Prostate gland (tissue), 2 donors: ENCODE measurements at regions of chr3 and their contacts with region 1.

Region 1: DNA sequence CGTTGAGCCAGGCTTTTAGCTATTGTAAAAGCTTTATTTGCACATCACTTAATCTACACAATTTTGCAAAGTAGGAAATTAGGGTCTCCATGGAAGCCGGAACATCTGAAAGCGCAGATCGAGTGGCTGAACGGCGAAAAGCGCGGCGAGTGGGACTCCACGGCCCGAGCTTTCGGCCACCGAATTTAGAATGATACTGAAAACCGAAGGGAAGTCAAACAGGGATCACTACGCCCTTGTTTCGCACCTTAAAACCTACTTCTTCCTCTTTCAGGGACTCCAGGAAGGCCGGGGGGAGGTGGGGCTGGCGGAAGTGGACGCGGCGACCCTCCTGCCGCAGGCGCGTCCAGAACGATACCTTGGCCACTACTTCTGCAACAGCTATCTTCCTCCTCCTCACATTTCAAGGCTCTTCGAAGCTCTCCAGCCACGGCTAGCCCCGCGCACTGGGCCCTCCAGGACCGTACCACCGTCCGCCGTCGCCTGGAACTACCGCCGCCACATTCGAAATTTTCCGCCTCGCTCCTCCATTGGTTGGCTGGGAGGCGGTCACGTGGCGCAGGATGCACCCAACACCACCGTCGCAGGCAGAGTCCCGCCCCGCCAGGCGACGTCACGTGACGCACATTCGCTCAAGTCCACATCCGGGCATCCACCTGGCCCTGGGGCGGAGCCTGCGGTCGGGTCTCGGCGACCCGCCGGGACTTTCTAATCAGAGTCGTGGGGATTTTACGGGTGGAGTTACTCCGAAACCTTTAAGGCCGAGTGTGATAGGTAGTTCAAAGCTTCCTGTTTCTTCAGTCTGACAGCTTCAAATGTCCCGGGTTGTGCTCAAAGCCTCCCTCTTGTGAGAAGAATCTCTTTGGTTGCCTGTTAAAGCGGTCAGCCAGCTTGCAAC is at the start of gene SGO1:
- DNase-seq: peak; percentile 99
- H3K4me3 ChIP-seq: peak within 1 kb of the TSS; percentile 57 to 58
- H3K27ac ChIP-seq: peak within 1 kb of the TSS; percentile 88 to 95
- H3K4me1 ChIP-seq: no peaks in the 10 kb centered on the region
- H3K27me3 ChIP-seq: no peaks in the 10 kb centered on the region
- CTCF ChIP-seq: peak in 2 of 4 experiments; percentile 29 to 34
- POLR2A ChIP-seq: peak; percentile 84
- total RNA-seq, gene SGO1: 0.41 to 7.3 TPM

Region 2: GRCh38 chr3:20141851-20142250 is 44.1 kb before region 1 on chr3:
- intact Hi-C with region 1: loop called (anchors 5 kb)
- DNase-seq: peak; percentile 34
- H3K4me3 ChIP-seq: no peak overlapping the region
- H3K27ac ChIP-seq: peak overlapping the region in 1 of 2 donors; percentile 36
- H3K4me1 ChIP-seq: no peaks in the 10 kb centered on the region
- H3K27me3 ChIP-seq: no peaks in the 10 kb centered on the region
- CTCF ChIP-seq: no peak
- POLR2A ChIP-seq: no peak

Region 3: DNA sequence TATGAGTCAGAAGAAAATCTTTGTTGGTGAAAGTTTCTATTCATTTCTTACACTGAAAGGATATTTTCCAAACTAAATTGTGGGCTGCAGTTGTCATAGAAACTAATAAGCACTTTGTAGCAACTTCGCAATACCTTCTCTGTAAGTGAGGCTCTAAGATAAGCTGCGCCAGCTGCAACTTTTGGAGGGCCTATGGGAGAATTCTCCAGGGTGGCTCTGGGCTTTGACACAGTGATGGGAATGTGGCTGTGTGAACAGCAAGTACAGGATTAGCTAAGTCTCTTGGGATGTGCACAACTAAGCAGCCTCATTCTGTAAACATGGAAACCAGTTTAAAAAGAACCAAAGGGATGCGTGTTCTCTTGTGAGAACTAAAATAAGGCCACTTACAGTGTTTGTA is 124.7 kb after region 1 on chr3:
- intact Hi-C with region 1: no loop called
- DNase-seq: no peak
- H3K4me3 ChIP-seq: no peak overlapping the region
- H3K27ac ChIP-seq: no peak overlapping the region
- H3K4me1 ChIP-seq: no peaks in the 10 kb centered on the region
- H3K27me3 ChIP-seq: no peaks in the 10 kb centered on the region
- CTCF ChIP-seq: no peak
- POLR2A ChIP-seq: no peak

Region 4: DNA sequence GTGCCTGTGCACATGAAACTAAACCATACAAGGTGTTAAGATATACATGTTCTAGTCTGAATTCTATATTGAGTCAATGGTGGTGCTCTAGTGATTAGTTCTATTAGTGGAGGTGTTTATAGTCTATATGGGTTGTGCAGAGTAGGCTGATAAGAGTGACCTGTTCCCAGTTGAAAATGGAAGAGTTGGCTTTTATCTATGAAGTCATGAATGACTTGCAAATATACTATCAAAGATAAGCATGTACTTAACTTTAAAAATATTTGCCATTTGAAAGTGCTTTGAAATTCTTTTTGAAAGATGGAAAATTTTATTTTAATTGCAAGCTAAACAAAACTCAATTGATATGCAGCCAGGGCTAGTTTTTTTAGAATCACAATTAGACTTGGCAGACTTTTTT is 150.6 kb after region 1 on chr3:
- intact Hi-C with region 1: no loop called
- DNase-seq: no peak
- H3K4me3 ChIP-seq: no peak overlapping the region
- H3K27ac ChIP-seq: no peak overlapping the region
- H3K4me1 ChIP-seq: no peaks in the 10 kb centered on the region
- H3K27me3 ChIP-seq: no peaks in the 10 kb centered on the region
- CTCF ChIP-seq: no peak
- POLR2A ChIP-seq: no peak